ENCODE measurements at regions of chr19 and their contacts with region 1.

Region 1: GRCh38 chr19:19192078-19192882 is at the starts of genes BORCS8 and RFXANK:
- DNase-seq: peak; percentile 98
- ATAC-seq: peak; percentile 92
- H3K4me3 ChIP-seq: peak within 1 kb of the TSS; percentile 64 to 98 (median 76)
- H3K27ac ChIP-seq: peak within 1 kb of the TSS; percentile 91
- H3K4me1 ChIP-seq: peaks cover 28% of the 10 kb centered on the region
- H3K27me3 ChIP-seq: no peaks in the 10 kb centered on the region; a peak in 1 of 5 replicates
- CTCF ChIP-seq: 0 out of 2 replicates have a peak, but pooled peaks have one; percentile 29
- EP300 ChIP-seq: peak; percentile 16 to 48; a peak in 2 of 4 replicates
- POLR2A ChIP-seq: peak; percentile 55 to 66
- RAD21 ChIP-seq: no peak; the same call in none of the 2 replicates
- total RNA-seq, gene BORCS8: 13.3 and 16.8 TPM in 2 replicates
- total RNA-seq, gene RFXANK: 80.7 and 83.1 TPM in 2 replicates

Region 2: GRCh38 chr19:19155495-19156219 is 36.6 kb before region 1 on chr19:
- CTCF ChIA-PET with region 1: no interaction called
- POLR2A ChIA-PET with region 1: no interaction called
- in situ Hi-C with region 1: no loop called
- intact Hi-C with region 1: no loop called
- DNase-seq: no peak
- ATAC-seq: no peak
- H3K4me3 ChIP-seq: no peak overlapping the region
- H3K27ac ChIP-seq: no peak overlapping the region
- H3K4me1 ChIP-seq: no peaks in the 10 kb centered on the region
- H3K27me3 ChIP-seq: no peaks in the 10 kb centered on the region
- CTCF ChIP-seq: no peak
- EP300 ChIP-seq: no peak
- POLR2A ChIP-seq: no peak
- RAD21 ChIP-seq: no peak

Region 3: GRCh38 chr19:19179548-19180441 is 12.5 kb before region 1 on chr19:
- CTCF ChIA-PET with region 1: no interaction called
- POLR2A ChIA-PET with region 1: no interaction called
- in situ Hi-C with region 1: no loop called
- intact Hi-C with region 1: no loop called
- DNase-seq: no peak
- ATAC-seq: no peak
- H3K4me3 ChIP-seq: no peak overlapping the region
- H3K27ac ChIP-seq: no peak overlapping the region
- H3K4me1 ChIP-seq: peaks cover 2% of the 10 kb centered on the region
- H3K27me3 ChIP-seq: no peaks in the 10 kb centered on the region
- CTCF ChIP-seq: no peak
- EP300 ChIP-seq: no peak
- POLR2A ChIP-seq: no peak
- RAD21 ChIP-seq: no peak

Region 4: DNA sequence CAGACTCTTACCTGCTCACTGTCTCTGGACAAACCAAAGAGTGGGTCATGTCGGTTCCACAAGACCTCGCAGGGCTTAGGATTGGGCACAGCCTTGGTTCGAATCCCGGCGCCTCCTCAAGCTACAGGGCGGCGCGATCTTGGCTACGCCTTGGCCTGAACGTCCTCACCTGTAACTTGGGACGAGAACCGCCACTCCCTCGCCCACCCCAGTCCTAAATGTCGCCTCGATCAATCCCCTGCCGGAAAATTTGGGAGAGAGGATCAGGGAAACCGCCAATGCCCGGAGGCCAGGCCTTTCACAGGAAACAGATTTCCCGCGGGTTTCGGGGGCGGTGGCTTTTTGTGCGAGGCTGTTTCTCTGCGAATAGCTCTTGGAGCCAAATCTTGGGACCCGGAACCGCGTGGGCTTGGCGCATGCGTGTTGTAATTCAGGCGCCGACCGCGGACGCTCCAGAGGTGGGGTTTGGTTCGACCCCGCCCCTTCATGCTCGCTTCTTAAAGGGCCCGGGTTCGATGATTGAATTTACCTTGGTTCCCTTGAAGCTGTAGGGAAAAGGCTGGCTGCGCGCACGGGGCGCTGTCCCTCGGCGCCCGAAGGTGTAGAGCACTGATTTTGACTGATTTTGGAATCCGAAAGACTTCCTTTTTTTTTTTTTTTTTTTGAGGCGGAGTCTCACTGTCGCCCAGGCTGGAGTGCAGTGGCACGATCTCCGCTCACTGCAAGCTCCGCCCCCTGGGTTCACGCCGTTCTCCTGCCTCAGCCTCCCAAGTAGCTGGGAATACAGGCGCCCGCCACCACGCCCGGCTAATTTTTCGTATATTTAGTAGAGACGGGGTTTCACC is 11.0 kb after region 1 on chr19 and contains the start of gene NR2C2AP:
- CTCF ChIA-PET with region 1: no interaction called
- POLR2A ChIA-PET with region 1: interaction called, 43 read pairs
- in situ Hi-C with region 1: no loop called
- intact Hi-C with region 1: no loop called
- DNase-seq: peak; percentile 83
- ATAC-seq: peak; percentile 83
- H3K4me3 ChIP-seq: peak within 1 kb of the TSS; percentile 76 to 93 (median 90)
- H3K27ac ChIP-seq: peak within 1 kb of the TSS; percentile 65
- H3K4me1 ChIP-seq: peaks cover 13% of the 10 kb centered on the region
- H3K27me3 ChIP-seq: peaks cover 3 to 11% of the 10 kb centered on the region in 2 experiments; a peak in 2 of 5 replicates
- CTCF ChIP-seq: no peak
- EP300 ChIP-seq: no peak
- POLR2A ChIP-seq: peak; percentile 48 to 52
- RAD21 ChIP-seq: no peak
- total RNA-seq, gene NR2C2AP: 25.5 and 26.8 TPM in 2 replicates

Region 5: GRCh38 chr19:19320362-19321142 is 128.3 kb after region 1 on chr19 and contains the starts of genes MAU2 and SUGP1:
- CTCF ChIA-PET with region 1: no interaction called
- POLR2A ChIA-PET with region 1: no interaction called
- in situ Hi-C with region 1: no loop called
- intact Hi-C with region 1: loop called (anchors 2 kb)
- DNase-seq: peak; percentile 92
- ATAC-seq: peak; percentile 95
- H3K4me3 ChIP-seq: peak within 1 kb of the TSS; percentile 82 to 100 (median 95)
- H3K27ac ChIP-seq: peak within 1 kb of the TSS; percentile 85
- H3K4me1 ChIP-seq: peaks cover 26% of the 10 kb centered on the region
- H3K27me3 ChIP-seq: no peaks in the 10 kb centered on the region; a peak in 1 of 5 replicates
- CTCF ChIP-seq: peak; percentile 38; the same call in 1 of the 2 replicates
- EP300 ChIP-seq: no peak
- POLR2A ChIP-seq: peak; percentile 86 to 87
- RAD21 ChIP-seq: peak; percentile 49; the same call in 1 of the 2 replicates
- total RNA-seq, gene MAU2: 11.2 and 16.8 TPM in 2 replicates
- total RNA-seq, gene SUGP1: 17.7 and 25.9 TPM in 2 replicates